Left colon (tissue), 2 donors: ENCODE measurements at regions of chr9 and their contacts with region 1.

Region 1: GRCh38 chr9:1285514-1285913 is 235.4 kb downstream of the DMRT2 start:
- DNase-seq: no peak
- ATAC-seq: no peak

Region 2: DNA sequence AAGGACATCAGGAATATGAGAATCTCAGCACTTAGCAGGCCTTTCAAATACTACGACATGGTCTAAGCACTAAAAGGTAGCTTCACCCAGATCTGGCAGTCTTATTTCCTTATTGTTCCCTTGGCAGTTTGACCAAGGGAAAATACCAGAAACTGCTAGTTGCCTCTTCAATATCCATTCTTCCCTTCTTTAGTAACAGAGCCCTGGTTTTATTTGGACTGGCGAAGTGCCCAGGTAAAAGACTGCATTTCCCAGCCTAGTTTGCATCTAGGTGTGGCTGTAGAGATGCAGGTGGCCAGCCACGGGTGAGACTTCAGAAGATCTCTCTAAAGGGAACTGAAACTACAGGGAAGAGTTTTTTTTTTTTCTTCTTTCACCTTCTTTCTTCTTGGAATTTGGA is 213.8 kb before region 1 on chr9:
- intact Hi-C with region 1: no loop called
- DNase-seq: peak; percentile 78 to 87
- ATAC-seq: peak; percentile 98

Region 3: GRCh38 chr9:1340390-1340789 is 54.9 kb after region 1 on chr9:
- intact Hi-C with region 1: loop called in 1 of 2 experiments (anchors 10 kb)
- DNase-seq: no peak
- ATAC-seq: no peak